K562 (cell line): ENCODE measurements at regions of chr5 and their contacts with region 1.

Region 1: GRCh38 chr5:38434966-38435705 is 121.3 kb downstream of the LIFR start:
- DNase-seq: no peak
- ATAC-seq: no peak
- H3K4me3 ChIP-seq: no peak overlapping the region
- H3K27ac ChIP-seq: no peak overlapping the region
- H3K4me1 ChIP-seq: no peaks in the 10 kb centered on the region
- H3K27me3 ChIP-seq: peaks cover 25 to 36% of the 10 kb centered on the region in 2 experiments
- CTCF ChIP-seq: no peak
- EP300 ChIP-seq: no peak
- POLR2A ChIP-seq: no peak
- RAD21 ChIP-seq: no peak

Region 2: GRCh38 chr5:38453506-38453905 is 18.4 kb after region 1 on chr5:
- CTCF ChIA-PET with region 1: no interaction called
- POLR2A ChIA-PET with region 1: no interaction called
- in situ Hi-C with region 1: no loop called
- intact Hi-C with region 1: no loop called
- DNase-seq: no peak
- ATAC-seq: no peak
- H3K4me3 ChIP-seq: no peak overlapping the region
- H3K27ac ChIP-seq: no peak overlapping the region
- H3K4me1 ChIP-seq: no peaks in the 10 kb centered on the region
- H3K27me3 ChIP-seq: peaks cover 30 to 62% of the 10 kb centered on the region in 2 experiments
- CTCF ChIP-seq: no peak
- EP300 ChIP-seq: no peak
- POLR2A ChIP-seq: no peak
- RAD21 ChIP-seq: no peak

Region 3: GRCh38 chr5:38660194-38660668 is 225.1 kb after region 1 on chr5:
- CTCF ChIA-PET with region 1: no interaction called
- POLR2A ChIA-PET with region 1: no interaction called
- in situ Hi-C with region 1: loop called (anchors 5 kb)
- intact Hi-C with region 1: no loop called
- DNase-seq: peak; percentile 23 to 89 (median 56)
- ATAC-seq: peak; percentile 100
- H3K4me3 ChIP-seq: peak overlapping the region; percentile 37
- H3K27ac ChIP-seq: peak overlapping the region; percentile 68
- H3K4me1 ChIP-seq: 0 out of 5 replicates have a peak, but pooled peaks cover 3 to 4% of the 10 kb centered on the region in 2 experiments
- H3K27me3 ChIP-seq: peaks cover 5 to 6% of the 10 kb centered on the region in 2 experiments; a peak in 2 of 5 replicates
- CTCF ChIP-seq: no peak
- EP300 ChIP-seq: no peak
- POLR2A ChIP-seq: peak; percentile 79
- RAD21 ChIP-seq: 0 out of 4 replicates have a peak, but pooled peaks of 1 of the 2 experiments have one; percentile 21